ENCODE measurements at regions of chr17 and their contacts with region 1.

Region 1: GRCh38 chr17:75632863-75633485 is at the start of gene SMIM5:
- DNase-seq: peak; percentile 70 to 89 (median 82)
- ATAC-seq: peak; percentile 89
- H3K4me3 ChIP-seq: no peak within 1 kb of the TSS
- H3K4me3 Mint-ChIP-seq: no peak within 1 kb of the TSS
- H3K27ac ChIP-seq: no peak within 1 kb of the TSS
- H3K27ac Mint-ChIP-seq: no peak within 1 kb of the TSS
- H3K4me1 ChIP-seq: peaks cover 8% of the 10 kb centered on the region
- H3K4me1 Mint-ChIP-seq: peaks cover 5% of the 10 kb centered on the region
- H3K27me3 ChIP-seq: no peaks in the 10 kb centered on the region
- H3K27me3 Mint-ChIP-seq: no peaks in the 10 kb centered on the region
- CTCF ChIP-seq: peak; percentile 91
- total RNA-seq, gene SMIM5: 0.60 to 2.1 TPM

Region 2: DNA sequence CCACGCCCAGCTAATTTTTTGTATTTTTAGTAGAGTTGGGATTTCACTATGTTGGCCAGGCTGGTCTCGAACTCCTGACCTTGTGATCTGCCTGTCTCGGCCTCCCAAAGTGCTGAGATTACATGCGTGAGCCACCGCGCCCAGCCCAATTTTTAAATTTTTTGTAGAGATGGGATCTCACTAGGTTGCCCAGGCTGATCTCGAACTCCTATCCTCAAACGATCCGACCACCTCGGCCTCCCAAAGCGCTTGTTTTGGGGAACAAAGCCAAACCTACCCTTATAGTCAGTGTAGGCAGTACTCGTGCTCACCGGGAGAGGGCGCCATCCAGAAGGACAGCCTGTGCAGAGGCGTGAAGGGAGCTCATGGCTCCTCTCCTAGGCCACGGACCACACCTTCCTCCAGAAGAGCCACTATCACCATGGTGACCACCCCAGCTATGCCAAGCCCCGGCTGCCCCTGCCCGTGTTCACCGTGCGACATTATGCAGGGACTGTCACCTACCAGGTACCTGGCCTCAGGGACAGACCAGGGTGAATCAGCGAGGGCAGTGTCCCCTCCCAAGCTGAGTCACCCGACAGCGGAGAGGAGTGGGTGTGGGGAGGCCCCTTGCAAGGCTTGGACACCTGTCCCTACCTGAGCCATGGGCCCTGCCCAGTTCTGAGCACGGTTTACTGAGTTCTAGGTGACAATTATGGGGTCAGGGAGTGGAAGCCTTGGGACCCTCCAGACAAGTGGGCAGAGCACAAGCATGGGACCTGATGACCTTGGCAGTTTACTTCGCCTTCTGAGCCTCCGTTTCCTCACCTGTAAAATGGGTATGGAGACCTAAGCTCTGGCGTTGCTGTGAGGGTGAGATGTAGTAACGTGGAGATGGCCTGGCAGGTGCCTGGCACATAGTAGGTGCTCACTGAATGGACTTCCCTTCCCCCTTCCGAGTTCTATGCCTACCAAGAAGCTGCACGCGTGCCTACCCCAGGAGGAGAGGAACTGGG is 31.6 kb before region 1 on chr17:
- CTCF ChIA-PET with region 1: interaction called, 16 read pairs
- POLR2A ChIA-PET with region 1: no interaction called
- intact Hi-C with region 1: no loop called
- DNase-seq: peak; percentile 33 to 70 (median 64)
- ATAC-seq: peak; percentile 92
- H3K4me3 ChIP-seq: no peak overlapping the region
- H3K4me3 Mint-ChIP-seq: no peak overlapping the region
- H3K27ac ChIP-seq: no peak overlapping the region
- H3K27ac Mint-ChIP-seq: no peak overlapping the region
- H3K4me1 ChIP-seq: no peaks in the 10 kb centered on the region
- H3K4me1 Mint-ChIP-seq: peaks cover 2% of the 10 kb centered on the region
- H3K27me3 ChIP-seq: no peaks in the 10 kb centered on the region
- H3K27me3 Mint-ChIP-seq: no peaks in the 10 kb centered on the region
- CTCF ChIP-seq: peak; percentile 67

Region 3: DNA sequence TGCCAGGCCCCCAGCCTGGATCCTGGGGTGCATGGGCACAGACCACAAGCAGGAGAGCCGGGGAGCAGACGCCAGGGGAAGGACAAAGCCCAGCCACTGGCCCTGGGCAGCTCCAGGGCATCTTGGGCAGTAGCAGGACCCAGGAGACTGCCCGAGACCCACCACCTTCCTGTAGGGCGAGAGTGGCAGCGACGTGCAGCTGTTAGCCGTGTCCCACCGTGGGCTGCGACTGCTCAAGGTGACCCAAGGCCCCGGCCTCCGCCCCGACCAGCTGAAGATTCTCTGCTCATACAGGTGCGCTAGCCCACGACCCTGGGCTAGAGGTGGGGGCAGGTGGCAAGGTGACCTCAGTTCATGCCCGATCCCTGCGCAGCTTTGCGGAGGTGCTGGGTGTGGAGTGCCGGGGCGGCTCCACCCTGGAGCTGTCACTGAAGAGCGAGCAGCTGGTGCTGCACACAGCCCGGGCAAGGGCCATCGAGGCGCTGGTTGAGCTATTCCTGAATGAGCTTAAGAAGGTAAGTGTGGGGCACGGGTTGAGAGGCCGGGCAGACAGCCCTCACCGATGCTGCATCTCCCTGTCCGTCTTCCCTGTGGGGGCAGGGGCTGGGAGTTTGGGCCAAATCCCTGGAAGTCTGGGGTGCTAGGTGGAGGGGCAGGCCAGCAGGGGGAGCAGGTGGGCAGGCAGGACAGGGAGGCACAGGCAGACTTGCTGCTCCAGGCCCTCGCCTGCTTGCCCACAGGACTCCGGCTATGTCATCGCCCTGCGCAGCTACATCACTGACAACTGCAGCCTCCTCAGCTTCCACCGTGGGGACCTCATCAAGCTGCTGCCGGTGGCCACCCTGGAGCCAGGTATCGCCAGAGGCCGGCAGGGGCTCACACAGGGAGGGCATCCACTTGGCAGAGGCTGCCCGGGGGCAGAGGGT is 13.2 kb before region 1 on chr17:
- CTCF ChIA-PET with region 1: interaction called, 27 read pairs
- POLR2A ChIA-PET with region 1: no interaction called
- intact Hi-C with region 1: no loop called
- DNase-seq: no peak
- ATAC-seq: no peak
- H3K4me3 ChIP-seq: no peak overlapping the region
- H3K4me3 Mint-ChIP-seq: no peak overlapping the region
- H3K27ac ChIP-seq: no peak overlapping the region
- H3K27ac Mint-ChIP-seq: no peak overlapping the region
- H3K4me1 ChIP-seq: no peaks in the 10 kb centered on the region
- H3K4me1 Mint-ChIP-seq: no peaks in the 10 kb centered on the region
- H3K27me3 ChIP-seq: no peaks in the 10 kb centered on the region
- H3K27me3 Mint-ChIP-seq: no peaks in the 10 kb centered on the region
- CTCF ChIP-seq: no peak

Region 4: DNA sequence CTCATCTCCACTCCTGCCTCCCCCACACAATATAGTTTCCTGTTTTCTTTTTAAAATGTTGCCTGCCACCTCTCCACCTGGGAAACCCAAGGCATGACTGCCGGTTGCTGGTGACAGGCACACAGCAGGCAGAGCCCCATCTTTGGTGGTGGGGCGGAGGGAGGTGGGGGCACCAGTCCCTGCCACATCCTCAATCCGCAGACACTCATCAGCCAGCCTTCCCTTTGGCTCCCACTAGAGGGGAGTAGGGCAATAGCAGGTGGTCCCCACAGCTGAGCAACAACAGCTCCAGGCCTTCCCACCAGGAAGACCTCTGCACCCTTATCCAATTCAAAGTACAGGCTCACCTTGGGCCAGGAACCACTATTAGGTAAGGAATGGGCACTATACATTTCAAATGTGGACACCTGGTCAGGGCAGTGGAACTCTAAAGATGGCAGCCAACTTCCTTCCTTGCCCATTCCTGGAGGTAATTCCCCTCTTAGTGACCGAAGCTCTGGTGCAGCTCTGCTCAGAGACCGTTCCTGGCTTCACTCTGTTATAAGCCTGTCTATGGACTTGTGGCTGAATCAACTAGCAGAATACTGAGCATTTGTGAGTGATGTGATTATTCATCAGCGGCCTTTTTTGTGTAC is 20.1 kb after region 1 on chr17:
- CTCF ChIA-PET with region 1: interaction called, 48 read pairs
- POLR2A ChIA-PET with region 1: no interaction called
- intact Hi-C with region 1: no loop called
- DNase-seq: peak in 6 of 9 experiments; percentile 9 to 64 (median 42)
- ATAC-seq: peak; percentile 100
- H3K4me3 ChIP-seq: no peak overlapping the region
- H3K4me3 Mint-ChIP-seq: no peak overlapping the region
- H3K27ac ChIP-seq: no peak overlapping the region
- H3K27ac Mint-ChIP-seq: no peak overlapping the region
- H3K4me1 ChIP-seq: no peaks in the 10 kb centered on the region
- H3K4me1 Mint-ChIP-seq: peaks cover 9% of the 10 kb centered on the region
- H3K27me3 ChIP-seq: no peaks in the 10 kb centered on the region
- H3K27me3 Mint-ChIP-seq: no peaks in the 10 kb centered on the region
- CTCF ChIP-seq: peak; percentile 59

Region 5: GRCh38 chr17:75673487-75673886 is 40.5 kb after region 1 on chr17:
- CTCF ChIA-PET with region 1: interaction called, 11 read pairs
- POLR2A ChIA-PET with region 1: no interaction called
- intact Hi-C with region 1: no loop called
- DNase-seq: no peak
- ATAC-seq: no peak
- H3K4me3 ChIP-seq: no peak overlapping the region
- H3K4me3 Mint-ChIP-seq: no peak overlapping the region
- H3K27ac ChIP-seq: no peak overlapping the region
- H3K27ac Mint-ChIP-seq: no peak overlapping the region
- H3K4me1 ChIP-seq: peaks cover 2% of the 10 kb centered on the region
- H3K4me1 Mint-ChIP-seq: peaks cover 18% of the 10 kb centered on the region
- H3K27me3 ChIP-seq: no peaks in the 10 kb centered on the region
- H3K27me3 Mint-ChIP-seq: no peaks in the 10 kb centered on the region
- CTCF ChIP-seq: no peak

Measured in CD8-positive, alpha-beta T cell (primary cell).